HepG2 (cell line): ENCODE measurements at regions of chr10 and their contacts with region 1.

Region 1: DNA sequence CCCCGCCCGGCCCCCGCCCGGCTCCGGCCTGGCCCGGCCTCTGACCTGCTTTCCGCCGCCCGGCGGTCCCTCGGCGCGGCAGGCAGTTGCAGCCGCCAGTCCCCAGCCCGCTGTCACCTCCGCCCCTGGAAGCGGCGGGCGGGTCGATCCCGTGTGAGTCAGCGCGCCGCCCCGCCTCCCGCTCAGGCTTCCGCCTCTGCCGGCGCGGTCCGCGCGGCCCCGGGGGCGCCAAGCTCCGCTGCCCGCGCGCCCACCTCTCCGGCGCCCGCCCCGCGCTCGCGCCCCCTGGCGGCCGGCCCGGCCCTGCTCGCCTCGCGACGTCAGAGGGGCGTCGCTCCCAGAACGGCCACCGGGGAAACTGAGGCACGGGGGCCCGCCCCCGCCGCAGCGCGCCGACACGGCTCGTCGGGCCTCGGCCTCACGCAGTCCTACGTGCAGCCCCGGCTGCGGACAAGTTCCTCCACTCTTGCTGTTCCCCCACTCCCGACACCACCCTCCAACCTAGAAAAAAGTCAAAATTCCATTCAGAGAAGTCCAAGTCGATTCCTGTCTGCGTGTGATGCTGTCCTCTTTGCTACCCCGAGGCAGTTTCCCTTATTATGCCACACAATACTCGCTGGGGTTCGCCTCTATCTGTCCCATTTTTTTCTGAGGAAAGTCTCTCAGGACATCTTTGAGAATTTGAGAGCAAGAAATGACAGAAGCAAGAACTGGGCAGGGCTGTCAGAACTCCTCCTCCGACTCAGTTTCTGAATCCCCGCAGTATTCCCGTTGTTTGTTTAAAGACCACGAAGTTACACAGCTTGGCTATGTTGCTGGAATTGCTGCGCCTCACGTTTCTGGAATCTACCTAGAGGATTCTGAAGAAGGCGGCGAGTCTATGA is at the start of gene DNMBP:
- DNase-seq: peak; percentile 61
- ATAC-seq: peak; percentile 91
- H3K4me3 ChIP-seq: peak within 1 kb of the TSS; percentile 87 to 93 (median 93)
- H3K27ac ChIP-seq: peak within 1 kb of the TSS; percentile 60
- H3K4me1 ChIP-seq: peaks cover 83% of the 10 kb centered on the region
- H3K27me3 ChIP-seq: no peaks in the 10 kb centered on the region; a peak in 1 of 5 replicates
- CTCF ChIP-seq: peak; percentile 68
- EP300 ChIP-seq: no peak
- POLR2A ChIP-seq: peak in 1 of 2 experiments; percentile 55; a peak in 1 of 4 replicates
- RAD21 ChIP-seq: peak; percentile 74
- total RNA-seq, gene DNMBP: 6.3 and 6.4 TPM in 2 replicates

Region 2: GRCh38 chr10:99742701-99743100 is 267.3 kb before region 1 on chr10:
- CTCF ChIA-PET with region 1: no interaction called
- POLR2A ChIA-PET with region 1: no interaction called
- in situ Hi-C with region 1: no loop called
- intact Hi-C with region 1: no loop called
- DNase-seq: no peak
- ATAC-seq: no peak
- H3K4me3 ChIP-seq: no peak overlapping the region
- H3K27ac ChIP-seq: no peak overlapping the region
- H3K4me1 ChIP-seq: peaks cover 6% of the 10 kb centered on the region; the same call in 1 of the 2 replicates
- H3K27me3 ChIP-seq: no peaks in the 10 kb centered on the region
- CTCF ChIP-seq: no peak
- EP300 ChIP-seq: no peak
- POLR2A ChIP-seq: no peak
- RAD21 ChIP-seq: no peak

Region 3: GRCh38 chr10:99854860-99855259 is 155.2 kb before region 1 on chr10:
- CTCF ChIA-PET with region 1: interaction called, 5 read pairs
- POLR2A ChIA-PET with region 1: no interaction called
- in situ Hi-C with region 1: no loop called
- intact Hi-C with region 1: loop called (anchors 5 kb)
- DNase-seq: peak; percentile 41
- ATAC-seq: peak; percentile 10
- H3K4me3 ChIP-seq: no peak overlapping the region
- H3K27ac ChIP-seq: no peak overlapping the region
- H3K4me1 ChIP-seq: peaks cover 28% of the 10 kb centered on the region
- H3K27me3 ChIP-seq: no peaks in the 10 kb centered on the region
- CTCF ChIP-seq: peak; percentile 59
- EP300 ChIP-seq: no peak
- POLR2A ChIP-seq: peak in 1 of 2 experiments; percentile 30; a peak in 1 of 4 replicates
- RAD21 ChIP-seq: 0 out of 2 replicates have a peak, but pooled peaks have one; percentile 21

Region 4: GRCh38 chr10:99926925-99927720 is 82.9 kb before region 1 on chr10:
- CTCF ChIA-PET with region 1: no interaction called
- POLR2A ChIA-PET with region 1: interaction called, 10 read pairs
- in situ Hi-C with region 1: no loop called
- intact Hi-C with region 1: loop called (anchors 2 kb)
- DNase-seq: peak; percentile 15
- ATAC-seq: no peak
- H3K4me3 ChIP-seq: peak overlapping the region; percentile 65 to 69 (median 68)
- H3K27ac ChIP-seq: peak overlapping the region; percentile 71
- H3K4me1 ChIP-seq: peaks cover 79% of the 10 kb centered on the region
- H3K27me3 ChIP-seq: no peaks in the 10 kb centered on the region; a peak in 1 of 5 replicates
- CTCF ChIP-seq: no peak
- EP300 ChIP-seq: no peak
- POLR2A ChIP-seq: no peak
- RAD21 ChIP-seq: no peak

Region 5: DNA sequence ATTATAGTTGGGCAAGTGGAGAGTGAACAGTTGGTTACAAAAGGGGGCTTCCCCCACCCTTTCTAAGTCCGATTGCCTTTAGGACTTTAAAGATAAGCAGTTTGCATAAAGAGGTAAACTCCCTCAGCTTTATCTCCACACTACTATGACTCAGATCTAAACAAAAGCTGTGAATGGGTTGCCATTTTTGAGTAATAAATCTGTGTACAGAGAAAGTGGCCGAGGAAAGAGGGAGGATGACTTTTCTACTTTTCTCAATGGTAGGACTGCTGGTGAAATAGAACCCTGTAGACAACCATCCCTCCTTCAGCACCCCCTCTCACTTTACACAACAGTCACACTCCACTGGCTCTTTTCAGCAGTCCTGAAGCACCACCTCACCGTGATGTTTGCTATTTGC is 71.5 kb before region 1 on chr10:
- CTCF ChIA-PET with region 1: no interaction called
- POLR2A ChIA-PET with region 1: no interaction called
- in situ Hi-C with region 1: no loop called
- intact Hi-C with region 1: loop called (anchors 2 kb)
- DNase-seq: no peak
- ATAC-seq: no peak
- H3K4me3 ChIP-seq: no peak overlapping the region
- H3K27ac ChIP-seq: no peak overlapping the region
- H3K4me1 ChIP-seq: no peaks in the 10 kb centered on the region
- H3K27me3 ChIP-seq: no peaks in the 10 kb centered on the region
- CTCF ChIP-seq: no peak
- EP300 ChIP-seq: no peak
- POLR2A ChIP-seq: no peak
- RAD21 ChIP-seq: no peak

Region 6: GRCh38 chr10:100046021-100046486 is 36.0 kb after region 1 on chr10:
- CTCF ChIA-PET with region 1: interaction called, 9 read pairs
- POLR2A ChIA-PET with region 1: no interaction called
- in situ Hi-C with region 1: no loop called
- intact Hi-C with region 1: loop called (anchors 5 kb)
- DNase-seq: peak; percentile 50
- ATAC-seq: peak; percentile 93
- H3K4me3 ChIP-seq: no peak overlapping the region
- H3K27ac ChIP-seq: no peak overlapping the region
- H3K4me1 ChIP-seq: peaks cover 7% of the 10 kb centered on the region; the same call in 1 of the 2 replicates
- H3K27me3 ChIP-seq: no peaks in the 10 kb centered on the region
- CTCF ChIP-seq: peak; percentile 92
- EP300 ChIP-seq: no peak
- POLR2A ChIP-seq: no peak
- RAD21 ChIP-seq: peak; percentile 83

Region 7: DNA sequence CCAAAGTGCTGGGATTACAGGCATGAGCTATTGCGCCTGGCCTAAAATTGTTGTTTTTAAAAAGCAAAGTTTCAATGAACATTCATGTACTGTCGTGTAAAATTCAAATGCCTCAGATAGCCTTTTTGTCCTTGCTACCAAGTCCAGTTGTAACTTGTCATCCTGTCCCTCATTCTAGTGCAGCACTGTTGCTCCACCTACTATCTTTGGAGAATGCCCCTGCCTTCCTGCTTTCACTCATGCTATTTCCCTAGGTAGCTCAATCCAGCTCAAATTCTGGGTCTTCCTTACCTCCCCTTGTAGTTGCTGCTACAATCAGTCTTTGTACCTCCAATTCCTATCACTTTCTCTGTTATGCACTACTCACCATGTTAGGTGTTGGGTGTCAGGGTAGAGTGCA is 74.8 kb after region 1 on chr10:
- CTCF ChIA-PET with region 1: no interaction called
- POLR2A ChIA-PET with region 1: no interaction called
- in situ Hi-C with region 1: no loop called
- intact Hi-C with region 1: no loop called
- DNase-seq: no peak
- ATAC-seq: peak; percentile 43
- H3K4me3 ChIP-seq: no peak overlapping the region
- H3K27ac ChIP-seq: no peak overlapping the region
- H3K4me1 ChIP-seq: peaks cover 62% of the 10 kb centered on the region
- H3K27me3 ChIP-seq: no peaks in the 10 kb centered on the region; a peak in 2 of 5 replicates
- CTCF ChIP-seq: no peak
- EP300 ChIP-seq: no peak
- POLR2A ChIP-seq: no peak
- RAD21 ChIP-seq: no peak

Region 8: GRCh38 chr10:100267237-100268104 is 257.4 kb after region 1 on chr10 and contains the start of gene CWF19L1:
- CTCF ChIA-PET with region 1: no interaction called
- POLR2A ChIA-PET with region 1: no interaction called
- in situ Hi-C with region 1: no loop called
- intact Hi-C with region 1: no loop called
- DNase-seq: peak; percentile 76
- ATAC-seq: peak; percentile 90
- H3K4me3 ChIP-seq: peak within 1 kb of the TSS; percentile 79 to 100 (median 98)
- H3K27ac ChIP-seq: peak within 1 kb of the TSS; percentile 83
- H3K4me1 ChIP-seq: peaks cover 39% of the 10 kb centered on the region
- H3K27me3 ChIP-seq: no peaks in the 10 kb centered on the region; a peak in 1 of 5 replicates
- CTCF ChIP-seq: no peak
- EP300 ChIP-seq: peak in 1 of 2 experiments; percentile 39; a peak in 2 of 4 replicates
- POLR2A ChIP-seq: peak; percentile 78 to 81
- RAD21 ChIP-seq: no peak
- total RNA-seq, gene CWF19L1: 42.1 and 60.0 TPM in 2 replicates